ENCODE measurements at regions of chr2 and their contacts with region 1.

Region 1: DNA sequence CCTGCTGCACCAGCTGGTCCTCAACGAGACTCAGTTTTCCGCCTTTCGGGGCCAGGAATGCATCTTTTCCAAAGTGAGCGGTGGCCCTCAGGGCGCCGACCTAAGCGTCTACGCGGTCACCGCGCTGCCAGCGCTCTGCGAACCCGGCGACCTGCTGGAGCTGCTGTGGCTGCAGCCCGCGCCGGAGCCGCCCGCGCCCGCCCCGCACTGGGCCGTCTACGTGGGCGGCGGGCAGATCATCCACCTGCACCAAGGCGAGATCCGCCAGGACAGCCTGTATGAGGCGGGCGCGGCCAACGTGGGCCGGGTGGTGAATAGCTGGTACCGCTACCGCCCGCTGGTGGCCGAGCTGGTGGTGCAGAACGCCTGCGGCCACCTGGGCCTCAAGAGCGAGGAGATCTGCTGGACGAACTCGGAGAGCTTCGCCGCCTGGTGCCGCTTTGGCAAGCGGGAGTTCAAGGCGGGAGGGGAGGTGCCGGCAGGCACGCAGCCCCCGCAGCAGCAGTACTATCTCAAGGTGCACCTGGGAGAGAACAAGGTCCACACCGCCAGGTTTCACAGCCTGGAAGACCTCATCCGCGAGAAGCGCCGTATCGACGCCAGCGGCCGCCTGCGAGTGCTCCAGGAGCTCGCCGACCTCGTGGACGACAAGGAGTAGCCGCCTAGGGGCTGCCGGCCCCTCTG is 1.8 kb downstream of the LRATD1 start:
- DNase-seq: peak; percentile 54
- ATAC-seq: peak; percentile 62
- H3K4me3 ChIP-seq: peak overlapping the region; percentile 38
- H3K27ac ChIP-seq: no peak overlapping the region
- H3K4me1 ChIP-seq: no peaks in the 10 kb centered on the region; the same call in 1 of the 2 replicates
- H3K27me3 ChIP-seq: peaks cover 25% of the 10 kb centered on the region
- CTCF ChIP-seq: peak; percentile 62
- POLR2A ChIP-seq: no peak
- RAD21 ChIP-seq: peak; percentile 61

Region 2: GRCh38 chr2:13193898-13194297 is 1440.4 kb before region 1 on chr2:
- CTCF ChIA-PET with region 1: no interaction called
- POLR2A ChIA-PET with region 1: no interaction called
- dilution Hi-C with region 1: no loop called
- in situ Hi-C with region 1: no loop called
- intact Hi-C with region 1: loop called (anchors 5 kb)
- DNase-seq: peak; percentile 16
- ATAC-seq: no peak
- H3K4me3 ChIP-seq: no peak overlapping the region
- H3K27ac ChIP-seq: no peak overlapping the region
- H3K4me1 ChIP-seq: no peaks in the 10 kb centered on the region
- H3K27me3 ChIP-seq: no peaks in the 10 kb centered on the region
- CTCF ChIP-seq: peak; percentile 32
- POLR2A ChIP-seq: no peak
- RAD21 ChIP-seq: peak; percentile 42

Region 3: GRCh38 chr2:14385043-14385442 is 249.3 kb before region 1 on chr2:
- CTCF ChIA-PET with region 1: no interaction called
- POLR2A ChIA-PET with region 1: no interaction called
- dilution Hi-C with region 1: no loop called
- in situ Hi-C with region 1: no loop called
- intact Hi-C with region 1: no loop called
- DNase-seq: peak; percentile 2
- ATAC-seq: no peak
- H3K4me3 ChIP-seq: no peak overlapping the region
- H3K27ac ChIP-seq: no peak overlapping the region
- H3K4me1 ChIP-seq: no peaks in the 10 kb centered on the region
- H3K27me3 ChIP-seq: no peaks in the 10 kb centered on the region
- CTCF ChIP-seq: no peak
- POLR2A ChIP-seq: no peak
- RAD21 ChIP-seq: no peak

Region 4: DNA sequence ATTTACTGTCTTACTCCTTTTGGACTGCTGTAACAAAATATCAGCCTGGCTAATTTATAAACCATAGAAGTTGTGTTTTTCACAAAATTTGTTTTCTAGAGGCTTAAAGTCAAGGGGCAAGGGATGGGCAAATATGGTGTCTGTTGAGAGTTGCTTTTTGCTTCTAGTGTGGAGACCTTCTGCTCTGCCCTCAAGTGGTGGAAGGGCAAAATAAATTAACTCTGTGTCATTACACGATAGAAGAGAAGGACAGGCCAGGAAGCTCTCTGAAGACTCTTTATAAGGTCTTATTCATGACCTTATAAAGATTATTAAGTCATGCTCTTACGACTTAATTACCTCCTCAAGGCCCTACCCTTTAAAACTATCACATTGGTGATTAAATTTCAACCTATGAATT is 183.0 kb before region 1 on chr2:
- CTCF ChIA-PET with region 1: interaction called, 14 read pairs
- POLR2A ChIA-PET with region 1: no interaction called
- dilution Hi-C with region 1: no loop called
- in situ Hi-C with region 1: no loop called
- intact Hi-C with region 1: no loop called
- DNase-seq: no peak
- ATAC-seq: no peak
- H3K4me3 ChIP-seq: no peak overlapping the region
- H3K27ac ChIP-seq: no peak overlapping the region
- H3K4me1 ChIP-seq: no peaks in the 10 kb centered on the region
- H3K27me3 ChIP-seq: no peaks in the 10 kb centered on the region
- CTCF ChIP-seq: no peak
- POLR2A ChIP-seq: no peak
- RAD21 ChIP-seq: no peak

Region 5: GRCh38 chr2:14756976-14757657 is 122.8 kb after region 1 on chr2:
- CTCF ChIA-PET with region 1: no interaction called
- POLR2A ChIA-PET with region 1: no interaction called
- dilution Hi-C with region 1: no loop called
- in situ Hi-C with region 1: no loop called
- intact Hi-C with region 1: loop called (anchors 10 kb)
- DNase-seq: peak; percentile 85
- ATAC-seq: peak; percentile 82
- H3K4me3 ChIP-seq: no peak overlapping the region
- H3K27ac ChIP-seq: no peak overlapping the region
- H3K4me1 ChIP-seq: no peaks in the 10 kb centered on the region
- H3K27me3 ChIP-seq: no peaks in the 10 kb centered on the region
- CTCF ChIP-seq: no peak
- POLR2A ChIP-seq: no peak
- RAD21 ChIP-seq: no peak

Region 6: GRCh38 chr2:15042801-15043217 is 408.5 kb after region 1 on chr2:
- CTCF ChIA-PET with region 1: no interaction called
- POLR2A ChIA-PET with region 1: no interaction called
- dilution Hi-C with region 1: no loop called
- in situ Hi-C with region 1: no loop called
- intact Hi-C with region 1: loop called (anchors 5 kb)
- DNase-seq: peak; percentile 98
- ATAC-seq: peak; percentile 87
- H3K4me3 ChIP-seq: no peak overlapping the region
- H3K27ac ChIP-seq: peak overlapping the region; percentile 99
- H3K4me1 ChIP-seq: peaks cover 16% of the 10 kb centered on the region
- H3K27me3 ChIP-seq: no peaks in the 10 kb centered on the region
- CTCF ChIP-seq: no peak
- POLR2A ChIP-seq: no peak
- RAD21 ChIP-seq: no peak

Measured in IMR-90 (cell line).